Activated CD8-positive, alpha-beta T cell treated with anti-CD3 and anti-CD28 coated beads, Interleukin-2, amount 10 ng/mL, durations not matched to agents 7 days and 5 days (primary cell): ENCODE measurements at regions of chr18 and their contacts with region 1.

Region 1: GRCh38 chr18:2547477-2548087 is 23.7 kb downstream of the METTL4 start:
- DNase-seq: no peak
- ATAC-seq: peak; percentile 55
- H3K4me3 Mint-ChIP-seq: no peak overlapping the region
- H3K27ac Mint-ChIP-seq: no peak overlapping the region
- H3K4me1 Mint-ChIP-seq: peaks cover 3% of the 10 kb centered on the region
- H3K27me3 Mint-ChIP-seq: no peaks in the 10 kb centered on the region

Region 2: DNA sequence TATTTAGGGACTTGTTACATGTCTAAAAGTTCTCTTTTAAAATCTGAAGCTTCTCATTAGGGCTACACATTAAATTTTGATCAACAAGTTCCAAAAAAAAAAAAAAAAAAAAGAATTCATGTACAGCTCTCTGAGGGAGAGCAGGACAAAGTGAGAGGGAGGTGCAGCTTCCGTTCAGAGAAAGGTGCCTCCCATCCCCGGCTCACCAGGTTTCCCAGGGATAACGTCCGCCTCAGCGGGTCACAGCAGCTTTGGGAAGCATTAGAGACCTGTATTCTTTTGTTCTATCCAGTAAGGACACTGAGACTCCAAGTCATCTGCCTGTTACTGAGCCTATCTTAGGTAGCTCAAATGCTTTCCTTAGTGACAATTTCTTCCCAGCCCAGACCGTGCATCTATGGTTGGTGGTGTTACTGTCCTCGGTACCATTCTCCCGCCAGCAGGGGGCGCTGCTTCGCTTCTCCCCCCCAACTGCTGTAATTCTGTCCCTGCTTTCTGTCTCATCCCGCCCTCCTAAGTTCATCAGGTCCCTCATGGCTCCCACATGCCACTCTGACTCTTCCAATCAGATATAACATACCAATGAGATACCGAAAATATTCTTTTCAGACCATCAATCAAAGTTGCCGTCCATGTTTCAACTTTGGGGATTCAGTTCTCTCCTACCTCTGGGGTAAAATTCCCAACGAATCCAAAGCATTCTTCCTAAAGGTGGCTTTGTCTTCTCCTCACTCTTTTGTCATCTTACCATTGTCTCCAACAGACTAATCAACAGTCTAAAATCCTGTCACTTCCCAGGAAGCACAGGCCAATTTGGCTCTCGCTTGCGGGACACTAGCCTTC is 442.7 kb before region 1 on chr18:
- CTCF ChIA-PET with region 1: interaction called, 22 read pairs
- POLR2A ChIA-PET with region 1: no interaction called
- DNase-seq: peak; percentile 66
- ATAC-seq: peak; percentile 84
- H3K4me3 Mint-ChIP-seq: no peak overlapping the region
- H3K27ac Mint-ChIP-seq: no peak overlapping the region
- H3K4me1 Mint-ChIP-seq: no peaks in the 10 kb centered on the region
- H3K27me3 Mint-ChIP-seq: no peaks in the 10 kb centered on the region

Region 3: GRCh38 chr18:2337552-2338141 is 209.9 kb before region 1 on chr18:
- CTCF ChIA-PET with region 1: interaction called, 39 read pairs
- POLR2A ChIA-PET with region 1: no interaction called
- DNase-seq: peak; percentile 56
- ATAC-seq: peak; percentile 44
- H3K4me3 Mint-ChIP-seq: no peak overlapping the region
- H3K27ac Mint-ChIP-seq: no peak overlapping the region
- H3K4me1 Mint-ChIP-seq: peaks cover 12% of the 10 kb centered on the region
- H3K27me3 Mint-ChIP-seq: peaks cover 20% of the 10 kb centered on the region

Region 4: DNA sequence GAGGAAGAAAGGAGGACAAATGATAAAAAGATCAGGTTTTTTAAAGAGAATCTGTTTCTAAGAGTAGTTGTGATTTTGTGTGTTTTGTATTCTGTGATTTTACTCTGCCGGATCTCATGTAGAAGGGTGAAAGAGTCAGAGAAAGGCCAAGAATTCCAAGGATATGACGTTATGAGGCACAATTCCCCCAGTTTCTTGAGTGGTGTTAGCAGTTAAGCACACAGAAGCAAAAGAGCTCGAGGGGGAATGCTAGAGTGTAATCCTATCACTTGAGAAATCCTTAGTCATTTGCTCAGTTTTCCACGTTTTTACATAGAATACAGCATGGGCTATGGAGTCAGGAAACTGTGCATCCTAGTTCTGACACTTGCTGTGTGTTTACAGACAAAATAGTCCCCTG is 11.1 kb before region 1 on chr18:
- CTCF ChIA-PET with region 1: interaction called, 10 read pairs
- POLR2A ChIA-PET with region 1: no interaction called
- DNase-seq: no peak
- ATAC-seq: no peak
- H3K4me3 Mint-ChIP-seq: no peak overlapping the region
- H3K27ac Mint-ChIP-seq: no peak overlapping the region
- H3K4me1 Mint-ChIP-seq: no peaks in the 10 kb centered on the region
- H3K27me3 Mint-ChIP-seq: no peaks in the 10 kb centered on the region

Region 5: GRCh38 chr18:2571200-2572143 is 23.9 kb after region 1 on chr18 and contains the starts of genes METTL4 and NDC80:
- CTCF ChIA-PET with region 1: interaction called, 11 read pairs
- POLR2A ChIA-PET with region 1: no interaction called
- DNase-seq: peak; percentile 90
- ATAC-seq: peak; percentile 81
- H3K4me3 Mint-ChIP-seq: peak within 1 kb of the TSS; percentile 98
- H3K27ac Mint-ChIP-seq: peak within 1 kb of the TSS; percentile 99
- H3K4me1 Mint-ChIP-seq: peaks cover 47% of the 10 kb centered on the region
- H3K27me3 Mint-ChIP-seq: no peaks in the 10 kb centered on the region
- total RNA-seq, gene METTL4: 22.2 to 22.3 TPM
- total RNA-seq, gene NDC80: 91.3 to 103 TPM